Activated CD4-positive, alpha-beta memory T cell treated with anti-CD3 and anti-CD28 coated beads for 36 hours (primary cell): ENCODE measurements at regions of chr6 and their contacts with region 1.

Region 1: GRCh38 chr6:144688713-144689112 is 403.6 kb downstream of the UTRN start:
- DNase-seq: no peak
- H3K4me3 Mint-ChIP-seq: no peak overlapping the region
- H3K27ac Mint-ChIP-seq: no peak overlapping the region
- H3K4me1 Mint-ChIP-seq: peaks cover 2% of the 10 kb centered on the region
- H3K27me3 Mint-ChIP-seq: no peaks in the 10 kb centered on the region

Region 2: DNA sequence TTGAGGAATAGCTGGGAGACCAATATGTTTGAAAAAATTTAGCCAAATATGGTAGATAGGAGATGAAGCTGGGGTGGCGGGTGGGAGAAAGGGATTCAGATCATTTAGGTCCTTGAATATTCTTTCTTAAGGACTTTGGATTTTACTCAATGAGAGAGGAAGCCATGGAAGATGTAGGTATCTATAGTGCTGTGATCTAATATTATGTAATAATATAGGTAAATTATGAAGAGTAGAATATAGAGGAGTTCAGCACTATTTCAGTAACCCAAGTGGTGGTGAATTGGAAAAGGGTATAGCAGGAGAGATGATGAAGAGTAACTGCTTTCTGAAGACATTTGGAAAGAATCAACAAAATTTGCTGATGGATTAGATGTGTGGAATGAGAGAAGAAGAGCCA is 14.1 kb after region 1 on chr6:
- CTCF ChIA-PET with region 1: no interaction called
- POLR2A ChIA-PET with region 1: no interaction called
- intact Hi-C with region 1: no loop called
- DNase-seq: no peak
- H3K4me3 Mint-ChIP-seq: no peak overlapping the region
- H3K27ac Mint-ChIP-seq: no peak overlapping the region
- H3K4me1 Mint-ChIP-seq: no peaks in the 10 kb centered on the region
- H3K27me3 Mint-ChIP-seq: no peaks in the 10 kb centered on the region

Region 3: DNA sequence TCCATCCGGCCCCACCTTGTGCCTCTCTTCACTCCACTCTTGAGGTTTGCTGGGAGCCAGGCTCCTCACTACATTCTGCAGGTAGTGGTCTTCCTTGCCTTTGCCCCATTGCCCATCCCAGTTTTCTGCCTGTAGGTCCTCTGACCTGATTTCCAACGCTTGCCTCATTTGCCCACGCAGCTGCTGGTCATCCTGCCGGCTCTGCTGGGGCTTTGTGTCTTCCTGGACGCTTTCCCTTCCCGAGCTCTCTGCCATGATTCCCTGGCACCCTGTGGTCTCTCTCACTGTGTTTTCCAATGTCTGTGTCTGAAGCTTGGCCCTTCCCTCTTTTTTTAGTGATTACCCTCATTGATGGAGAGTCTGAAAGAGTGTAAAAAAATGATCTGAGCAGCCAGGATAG is 48.0 kb after region 1 on chr6:
- CTCF ChIA-PET with region 1: no interaction called
- POLR2A ChIA-PET with region 1: no interaction called
- intact Hi-C with region 1: loop called (anchors 1 kb)
- DNase-seq: no peak
- H3K4me3 Mint-ChIP-seq: no peak overlapping the region
- H3K27ac Mint-ChIP-seq: no peak overlapping the region
- H3K4me1 Mint-ChIP-seq: no peaks in the 10 kb centered on the region
- H3K27me3 Mint-ChIP-seq: no peaks in the 10 kb centered on the region